Activated CD8-positive, alpha-beta T cell treated with anti-CD3 and anti-CD28 coated beads for 36 hours (primary cell): ENCODE measurements at regions of chr1 and their contacts with region 1.

Region 1: GRCh38 chr1:212035123-212035834 is at the starts of genes DTL and INTS7:
- DNase-seq: peak; percentile 99
- ATAC-seq: peak; percentile 87
- H3K4me3 Mint-ChIP-seq: peak within 1 kb of the TSS; percentile 97
- H3K27ac Mint-ChIP-seq: peak within 1 kb of the TSS; percentile 100
- H3K4me1 Mint-ChIP-seq: peaks cover 52% of the 10 kb centered on the region
- H3K27me3 Mint-ChIP-seq: peaks cover 1% of the 10 kb centered on the region
- CTCF ChIP-seq: peak; percentile 88
- total RNA-seq, gene DTL: 92.0 to 95.9 TPM
- total RNA-seq, gene INTS7: 23.2 to 25.4 TPM

Region 2: DNA sequence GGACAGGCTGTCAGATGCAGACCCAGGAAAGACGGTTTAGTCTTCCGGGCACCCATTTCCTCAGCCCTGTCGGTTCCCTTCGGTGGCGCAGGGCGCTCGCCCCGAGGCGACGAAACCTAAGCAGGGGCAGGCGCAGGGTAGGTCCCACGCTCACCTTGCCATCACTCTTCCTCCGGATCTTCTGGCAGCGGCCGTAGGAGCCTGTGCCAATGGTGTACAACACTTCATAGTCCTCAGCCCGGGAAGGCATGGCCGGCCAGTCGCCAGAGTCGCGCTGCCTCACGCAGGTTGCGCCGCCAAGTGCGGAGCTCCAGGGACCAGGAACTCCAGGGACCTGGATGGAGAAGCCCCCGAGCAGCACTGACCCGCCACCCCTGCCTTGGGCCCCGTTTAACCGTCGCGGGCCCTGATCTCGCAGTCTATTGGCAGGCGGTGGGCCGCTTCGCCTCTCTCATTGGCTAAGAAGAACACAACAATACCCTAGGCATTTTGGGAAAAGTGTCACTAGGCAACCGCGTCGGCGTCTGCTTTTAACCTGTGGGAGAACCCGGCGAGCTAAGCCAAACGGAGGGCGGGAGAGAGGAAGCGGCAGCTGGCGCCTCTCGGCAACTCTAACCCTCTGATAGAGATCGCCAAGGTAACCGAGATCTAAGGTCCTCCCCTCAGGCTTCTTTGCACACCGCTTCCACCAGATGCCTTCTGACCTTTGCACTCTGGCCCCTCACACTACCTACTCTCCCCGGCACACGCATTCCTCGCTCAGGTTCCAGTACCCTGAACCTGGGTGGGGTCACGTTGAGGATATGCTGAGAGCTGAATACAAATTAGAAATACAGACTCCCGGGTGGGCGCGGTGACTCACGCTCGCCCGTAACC is 359.8 kb before region 1 on chr1 and contains the start of gene NEK2:
- CTCF ChIA-PET with region 1: interaction called, 97 read pairs
- POLR2A ChIA-PET with region 1: interaction called, 9 read pairs
- intact Hi-C with region 1: loop called (anchors 2 kb)
- DNase-seq: peak; percentile 96
- ATAC-seq: peak; percentile 95
- H3K4me3 Mint-ChIP-seq: peak within 1 kb of the TSS; percentile 92
- H3K27ac Mint-ChIP-seq: peak within 1 kb of the TSS; percentile 69
- H3K4me1 Mint-ChIP-seq: peaks cover 9% of the 10 kb centered on the region
- H3K27me3 Mint-ChIP-seq: no peaks in the 10 kb centered on the region
- CTCF ChIP-seq: no peak
- total RNA-seq, gene NEK2: 29.9 to 30.0 TPM

Region 3: DNA sequence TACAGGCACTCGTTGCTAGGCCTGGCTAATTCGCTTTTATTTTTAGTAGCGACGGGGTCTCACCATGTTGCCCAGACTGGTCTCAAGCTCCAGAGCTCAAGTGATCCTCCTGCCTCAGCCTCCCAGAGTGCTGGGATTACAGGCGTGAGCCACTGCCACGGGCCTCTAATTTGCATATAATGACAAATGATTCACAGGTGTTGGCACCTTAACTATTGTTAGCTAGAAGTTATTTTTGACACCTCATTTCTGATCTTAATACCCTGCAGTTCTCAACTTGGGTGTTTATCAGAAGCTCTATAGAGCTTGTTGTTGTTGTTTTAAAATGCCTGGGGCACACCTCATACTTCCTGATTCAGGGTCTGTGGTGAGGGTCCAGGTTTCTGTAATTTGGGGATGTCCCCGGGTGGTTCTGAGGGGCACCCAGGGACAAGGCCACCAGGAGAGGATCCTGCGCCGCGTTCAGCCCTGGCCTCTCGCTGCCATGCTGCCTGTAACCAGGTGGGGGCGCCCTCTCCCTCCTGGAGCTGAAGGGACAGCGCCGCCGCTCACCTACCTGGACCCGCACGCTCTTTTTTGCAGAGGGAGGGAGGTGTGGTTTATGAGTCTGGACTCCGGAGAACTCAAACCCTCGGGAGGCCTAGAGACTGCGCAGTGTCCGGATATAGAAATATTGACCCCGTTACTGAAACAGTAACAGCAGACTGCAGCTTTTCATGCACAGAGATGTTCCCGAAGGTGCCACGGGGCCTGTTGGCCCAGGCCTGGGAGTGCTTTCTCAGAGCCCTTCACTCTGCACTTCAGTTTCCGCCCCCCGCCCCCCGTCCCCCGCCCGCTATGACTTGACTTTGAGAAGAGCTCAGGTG is 336.9 kb before region 1 on chr1:
- CTCF ChIA-PET with region 1: interaction called, 37 read pairs
- POLR2A ChIA-PET with region 1: interaction called, 5 read pairs
- intact Hi-C with region 1: loop called (anchors 5 kb)
- DNase-seq: peak; percentile 92
- ATAC-seq: peak; percentile 95
- H3K4me3 Mint-ChIP-seq: peak overlapping the region; percentile 33
- H3K27ac Mint-ChIP-seq: no peak overlapping the region
- H3K4me1 Mint-ChIP-seq: peaks cover 24% of the 10 kb centered on the region
- H3K27me3 Mint-ChIP-seq: peaks cover 1% of the 10 kb centered on the region
- CTCF ChIP-seq: peak; percentile 95

Region 4: DNA sequence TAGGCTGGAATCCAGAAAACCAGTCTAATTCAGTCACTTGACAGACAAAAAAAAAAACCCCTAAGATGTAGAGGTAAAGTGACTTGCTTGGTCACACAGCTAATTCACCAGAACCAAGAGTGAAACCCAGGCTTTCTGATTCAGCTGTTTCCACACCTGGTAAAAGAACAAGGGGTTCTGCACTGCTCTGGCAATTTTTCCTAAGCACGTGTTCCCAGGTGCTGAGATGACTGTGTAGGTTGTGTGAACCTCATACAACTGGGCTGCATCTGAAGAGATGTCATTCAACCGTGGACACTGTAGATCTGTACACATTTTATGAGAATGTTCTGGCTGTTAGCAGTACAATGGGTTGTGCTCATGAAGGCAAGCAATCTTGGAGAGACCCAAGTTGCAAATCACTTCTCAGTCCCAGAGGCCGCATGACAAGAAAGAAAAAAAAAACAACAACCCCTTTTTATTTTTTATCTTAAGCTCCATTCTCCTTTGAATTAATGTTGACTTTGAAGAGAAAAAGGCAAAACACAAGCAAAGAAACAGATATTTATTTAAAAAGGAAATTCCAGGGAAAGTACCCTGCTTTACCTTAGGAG is 95.3 kb before region 1 on chr1:
- CTCF ChIA-PET with region 1: interaction called, 17 read pairs
- POLR2A ChIA-PET with region 1: interaction called, 8 read pairs
- intact Hi-C with region 1: loop called (anchors 10 kb)
- DNase-seq: peak; percentile 81
- ATAC-seq: peak; percentile 57
- H3K4me3 Mint-ChIP-seq: no peak overlapping the region
- H3K27ac Mint-ChIP-seq: no peak overlapping the region
- H3K4me1 Mint-ChIP-seq: peaks cover 48% of the 10 kb centered on the region
- H3K27me3 Mint-ChIP-seq: no peaks in the 10 kb centered on the region
- CTCF ChIP-seq: no peak

Region 5: GRCh38 chr1:211951856-211952255 is 83.4 kb before region 1 on chr1:
- CTCF ChIA-PET with region 1: no interaction called
- POLR2A ChIA-PET with region 1: no interaction called
- intact Hi-C with region 1: no loop called
- DNase-seq: no peak
- ATAC-seq: peak; percentile 45
- H3K4me3 Mint-ChIP-seq: no peak overlapping the region
- H3K27ac Mint-ChIP-seq: peak overlapping the region; percentile 63
- H3K4me1 Mint-ChIP-seq: peaks cover 6% of the 10 kb centered on the region
- H3K27me3 Mint-ChIP-seq: no peaks in the 10 kb centered on the region
- CTCF ChIP-seq: no peak

Region 6: DNA sequence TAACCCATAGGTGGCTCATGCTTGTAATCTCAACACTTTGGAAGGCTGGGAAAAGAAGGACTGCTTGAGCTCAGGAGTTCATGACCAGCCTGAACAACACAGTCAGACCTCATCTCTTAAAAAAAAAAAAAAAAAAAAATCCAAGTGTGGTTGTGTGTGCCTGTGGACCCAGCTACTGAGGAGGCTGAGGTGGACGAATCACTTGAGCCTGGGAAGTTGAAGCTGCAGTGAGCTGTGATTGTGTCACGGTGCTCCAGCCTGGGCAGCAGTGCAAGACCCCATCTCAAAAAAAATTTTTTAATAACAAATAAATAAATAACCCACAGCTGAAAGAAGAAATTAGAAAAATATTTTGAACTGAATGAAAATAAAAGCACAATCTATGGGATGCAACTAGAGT is 13.7 kb before region 1 on chr1:
- CTCF ChIA-PET with region 1: interaction called, 38 read pairs
- POLR2A ChIA-PET with region 1: interaction called, 6 read pairs
- intact Hi-C with region 1: no loop called
- DNase-seq: no peak
- ATAC-seq: no peak
- H3K4me3 Mint-ChIP-seq: no peak overlapping the region
- H3K27ac Mint-ChIP-seq: no peak overlapping the region
- H3K4me1 Mint-ChIP-seq: peaks cover 3% of the 10 kb centered on the region
- H3K27me3 Mint-ChIP-seq: no peaks in the 10 kb centered on the region
- CTCF ChIP-seq: no peak

Region 7: DNA sequence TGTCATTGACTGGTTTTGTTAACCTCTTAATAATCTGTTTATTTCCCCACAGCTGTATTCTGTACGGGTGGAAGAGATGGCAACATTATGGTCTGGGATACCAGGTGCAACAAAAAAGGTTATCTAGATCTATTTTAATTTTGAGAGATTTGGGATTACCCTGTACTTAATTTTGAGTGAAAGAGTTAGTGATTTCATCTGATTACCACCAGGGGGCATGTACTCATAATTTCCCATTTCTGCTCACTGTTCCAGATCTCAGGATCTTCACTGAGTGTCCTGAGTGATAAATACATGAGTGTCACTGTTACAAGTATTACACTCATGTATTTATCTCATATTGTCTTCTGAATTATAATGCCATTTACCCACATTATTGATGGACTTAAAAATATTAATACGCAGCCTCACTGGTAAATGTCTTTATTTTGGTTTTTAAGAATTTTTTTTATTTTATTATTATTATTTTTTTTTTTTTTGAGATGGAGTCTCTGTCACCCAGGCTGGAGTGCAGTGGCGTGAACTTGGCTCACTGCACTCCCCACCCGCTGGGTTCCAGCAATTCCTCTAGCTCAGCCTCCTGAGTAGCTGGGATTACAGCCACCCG is 27.7 kb after region 1 on chr1:
- CTCF ChIA-PET with region 1: interaction called, 17 read pairs
- POLR2A ChIA-PET with region 1: no interaction called
- intact Hi-C with region 1: no loop called
- DNase-seq: no peak
- ATAC-seq: peak; percentile 53
- H3K4me3 Mint-ChIP-seq: no peak overlapping the region
- H3K27ac Mint-ChIP-seq: no peak overlapping the region
- H3K4me1 Mint-ChIP-seq: no peaks in the 10 kb centered on the region
- H3K27me3 Mint-ChIP-seq: no peaks in the 10 kb centered on the region
- CTCF ChIP-seq: peak; percentile 87

Region 8: GRCh38 chr1:212082765-212083406 is 47.6 kb after region 1 on chr1:
- CTCF ChIA-PET with region 1: no interaction called
- POLR2A ChIA-PET with region 1: no interaction called
- intact Hi-C with region 1: no loop called
- DNase-seq: no peak
- ATAC-seq: no peak
- H3K4me3 Mint-ChIP-seq: no peak overlapping the region
- H3K27ac Mint-ChIP-seq: no peak overlapping the region
- H3K4me1 Mint-ChIP-seq: peaks cover 3% of the 10 kb centered on the region
- H3K27me3 Mint-ChIP-seq: no peaks in the 10 kb centered on the region
- CTCF ChIP-seq: no peak

Region 9: GRCh38 chr1:212098310-212098709 is 63.0 kb after region 1 on chr1:
- CTCF ChIA-PET with region 1: no interaction called
- POLR2A ChIA-PET with region 1: no interaction called
- intact Hi-C with region 1: no loop called
- DNase-seq: no peak
- ATAC-seq: no peak
- H3K4me3 Mint-ChIP-seq: no peak overlapping the region
- H3K27ac Mint-ChIP-seq: no peak overlapping the region
- H3K4me1 Mint-ChIP-seq: peaks cover 10% of the 10 kb centered on the region
- H3K27me3 Mint-ChIP-seq: no peaks in the 10 kb centered on the region
- CTCF ChIP-seq: no peak

Region 10: GRCh38 chr1:212368073-212368484 is 332.8 kb after region 1 on chr1:
- CTCF ChIA-PET with region 1: interaction called, 11 read pairs
- POLR2A ChIA-PET with region 1: interaction called, 7 read pairs
- intact Hi-C with region 1: no loop called
- DNase-seq: peak; percentile 73
- ATAC-seq: peak; percentile 95
- H3K4me3 Mint-ChIP-seq: no peak overlapping the region
- H3K27ac Mint-ChIP-seq: peak overlapping the region; percentile 14
- H3K4me1 Mint-ChIP-seq: no peaks in the 10 kb centered on the region
- H3K27me3 Mint-ChIP-seq: no peaks in the 10 kb centered on the region
- CTCF ChIP-seq: peak; percentile 77